Tibial artery (tissue), 4 donors: ENCODE measurements at regions of chr13 and their contacts with region 1.

Region 1: GRCh38 chr13:106709522-106709921 is 141.6 kb upstream of the ARGLU1 start:
- DNase-seq: no peak
- H3K4me3 ChIP-seq: no peak overlapping the region
- H3K27ac ChIP-seq: no peak overlapping the region
- H3K4me1 ChIP-seq: peaks cover 0 to 6% (median 0%) of the 10 kb centered on the region in 4 donors
- H3K27me3 ChIP-seq: no peaks in the 10 kb centered on the region
- CTCF ChIP-seq: no peak

Region 2: DNA sequence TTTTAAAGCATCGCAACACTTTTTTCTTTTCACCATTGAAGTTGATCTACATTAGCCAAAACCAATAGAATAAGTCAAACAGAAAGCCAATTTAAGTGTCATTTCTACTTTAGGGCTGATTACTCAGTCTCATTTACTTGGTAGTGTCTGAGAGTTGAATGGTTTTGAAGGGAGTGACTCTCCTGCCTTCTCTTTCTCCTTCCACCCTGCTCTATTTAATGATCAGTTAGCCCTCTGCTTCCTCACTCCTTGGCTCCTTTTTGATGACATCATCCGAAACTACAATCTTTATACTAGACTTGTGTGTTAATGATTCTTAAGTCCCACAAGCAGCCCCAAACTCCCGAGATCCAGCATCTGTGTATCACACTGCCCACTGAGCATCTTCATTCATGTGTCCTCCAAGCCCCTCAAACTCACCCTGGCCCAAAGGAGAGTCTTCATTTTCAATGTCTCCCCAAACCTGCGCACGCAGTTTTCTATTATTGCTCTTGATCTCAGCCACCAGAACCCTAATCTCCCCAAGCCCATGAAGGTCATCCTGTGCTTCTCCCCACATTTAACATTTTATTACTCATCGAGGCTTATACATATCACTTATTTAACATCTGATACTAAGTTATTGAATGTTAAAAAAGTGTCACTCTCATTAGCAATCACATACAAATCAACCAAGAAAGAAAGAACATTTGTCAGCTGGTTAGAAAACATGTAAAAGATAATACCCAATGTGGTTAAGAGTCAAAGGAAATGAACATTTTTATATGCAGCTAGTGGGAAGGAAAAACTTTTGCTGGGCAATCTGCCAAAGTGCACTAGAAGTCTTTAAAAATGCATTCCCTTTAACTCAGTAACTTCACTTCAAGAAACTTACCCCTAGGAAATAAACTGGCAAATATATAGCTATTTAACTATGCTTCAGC is 109.4 kb before region 1 on chr13:
- intact Hi-C with region 1: no loop called
- DNase-seq: no peak
- H3K4me3 ChIP-seq: no peak overlapping the region
- H3K27ac ChIP-seq: peak overlapping the region in 1 of 2 donors; percentile 3
- H3K4me1 ChIP-seq: peaks cover 0 to 55% (median 17%) of the 10 kb centered on the region in 4 donors
- H3K27me3 ChIP-seq: no peaks in the 10 kb centered on the region
- CTCF ChIP-seq: no peak

Region 3: GRCh38 chr13:106722620-106723019 is 13.1 kb after region 1 on chr13:
- intact Hi-C with region 1: no loop called
- DNase-seq: no peak
- H3K4me3 ChIP-seq: no peak overlapping the region
- H3K27ac ChIP-seq: no peak overlapping the region
- H3K4me1 ChIP-seq: peaks cover 0 to 9% (median 0%) of the 10 kb centered on the region in 4 donors
- H3K27me3 ChIP-seq: no peaks in the 10 kb centered on the region
- CTCF ChIP-seq: no peak

Region 4: DNA sequence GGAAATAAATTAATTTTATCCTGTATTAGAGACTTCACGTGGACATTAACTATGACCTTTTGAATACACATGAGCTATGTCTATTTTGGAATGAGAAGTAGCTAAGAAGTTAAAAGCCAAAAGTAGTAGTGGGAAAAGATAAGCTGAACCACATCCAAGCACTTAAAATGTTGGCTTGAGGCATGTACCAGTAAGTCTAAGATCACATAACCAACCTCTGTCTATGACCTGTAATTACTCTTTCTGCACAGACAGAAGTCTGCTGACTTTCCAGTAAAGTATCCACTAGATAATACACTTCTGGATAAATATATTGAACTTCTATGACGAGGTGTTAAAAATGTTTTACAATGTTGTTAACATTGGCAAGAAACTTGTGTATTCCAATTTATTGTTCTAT is 1437.1 kb after region 1 on chr13:
- intact Hi-C with region 1: loop called (anchors 5 kb)
- DNase-seq: no peak
- H3K4me3 ChIP-seq: no peak overlapping the region
- H3K27ac ChIP-seq: no peak overlapping the region
- H3K4me1 ChIP-seq: no peaks in the 10 kb centered on the region
- H3K27me3 ChIP-seq: peaks cover 0 to 2% of the 10 kb centered on the region in 2 donors
- CTCF ChIP-seq: no peak